Activated T-helper 2 cell treated with anti-CD3 and anti-CD28 coated beads, Interferon-gamma antibody, Interleukin-2, Interleukin-4, amounts not matched to agents 10 μg/mL and 5 μg/mL and 100 μg/mL, durations not matched to agents 14 hours and 24 hours and 36 hours (primary cell): ENCODE measurements at regions of chr3 and their contacts with region 1.

Region 1: DNA sequence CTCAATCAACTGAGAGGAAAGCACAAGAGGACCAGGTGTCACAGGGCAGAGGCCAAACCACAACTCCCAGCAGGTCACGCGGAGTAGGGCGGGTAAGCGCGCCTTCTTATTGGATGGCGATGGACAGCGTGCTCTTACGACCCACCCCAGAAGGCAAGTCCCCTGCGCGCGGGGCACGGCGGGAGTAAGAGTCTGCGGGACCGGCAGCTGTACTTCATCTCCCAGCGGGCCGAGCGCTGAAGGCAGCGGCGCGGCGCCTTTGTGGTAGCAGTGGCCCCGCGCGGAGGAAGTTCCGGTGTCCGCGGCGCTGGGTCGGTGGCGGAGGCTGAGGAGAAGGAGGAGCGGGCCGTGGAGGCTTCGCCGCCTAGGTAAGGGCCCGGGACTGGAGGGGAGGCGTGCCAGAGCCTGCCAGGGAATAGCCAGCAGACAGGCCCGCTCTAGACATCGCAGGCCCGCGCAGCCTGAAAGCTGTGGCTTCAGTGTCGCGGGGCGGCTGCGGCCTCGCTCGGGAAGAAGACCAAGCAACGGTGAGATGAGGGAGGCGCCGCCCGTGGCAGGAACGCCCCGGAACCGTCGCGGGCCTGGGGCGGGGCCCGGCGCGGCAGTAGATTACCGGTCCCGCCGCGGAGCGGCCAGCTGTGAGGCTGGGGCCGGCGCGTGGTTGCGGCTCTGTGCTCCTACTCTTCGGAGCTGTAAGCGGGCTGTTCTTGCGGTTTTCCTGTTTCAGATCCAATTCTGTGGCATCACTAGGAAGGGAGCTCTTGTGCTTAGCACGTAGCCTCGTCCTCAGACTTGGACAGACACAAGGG is at the start of gene RBM6:
- DNase-seq: peak; percentile 95
- H3K4me3 Mint-ChIP-seq: peak within 1 kb of the TSS; percentile 91
- H3K27ac Mint-ChIP-seq: peak within 1 kb of the TSS; percentile 92
- H3K4me1 Mint-ChIP-seq: peaks cover 16% of the 10 kb centered on the region
- H3K27me3 Mint-ChIP-seq: no peaks in the 10 kb centered on the region
- total RNA-seq, gene RBM6: 99.2 and 104 TPM in 2 replicates

Region 2: GRCh38 chr3:49929331-49930240 is 10.5 kb before region 1 on chr3 and contains the start of gene MON1A:
- intact Hi-C with region 1: loop called (anchors 1 kb)
- DNase-seq: peak; percentile 84
- H3K4me3 Mint-ChIP-seq: peak within 1 kb of the TSS; percentile 90
- H3K27ac Mint-ChIP-seq: peak within 1 kb of the TSS; percentile 36
- H3K4me1 Mint-ChIP-seq: peaks cover 16% of the 10 kb centered on the region
- H3K27me3 Mint-ChIP-seq: no peaks in the 10 kb centered on the region
- total RNA-seq, gene MON1A: 15.1 and 15.7 TPM in 2 replicates

Region 3: DNA sequence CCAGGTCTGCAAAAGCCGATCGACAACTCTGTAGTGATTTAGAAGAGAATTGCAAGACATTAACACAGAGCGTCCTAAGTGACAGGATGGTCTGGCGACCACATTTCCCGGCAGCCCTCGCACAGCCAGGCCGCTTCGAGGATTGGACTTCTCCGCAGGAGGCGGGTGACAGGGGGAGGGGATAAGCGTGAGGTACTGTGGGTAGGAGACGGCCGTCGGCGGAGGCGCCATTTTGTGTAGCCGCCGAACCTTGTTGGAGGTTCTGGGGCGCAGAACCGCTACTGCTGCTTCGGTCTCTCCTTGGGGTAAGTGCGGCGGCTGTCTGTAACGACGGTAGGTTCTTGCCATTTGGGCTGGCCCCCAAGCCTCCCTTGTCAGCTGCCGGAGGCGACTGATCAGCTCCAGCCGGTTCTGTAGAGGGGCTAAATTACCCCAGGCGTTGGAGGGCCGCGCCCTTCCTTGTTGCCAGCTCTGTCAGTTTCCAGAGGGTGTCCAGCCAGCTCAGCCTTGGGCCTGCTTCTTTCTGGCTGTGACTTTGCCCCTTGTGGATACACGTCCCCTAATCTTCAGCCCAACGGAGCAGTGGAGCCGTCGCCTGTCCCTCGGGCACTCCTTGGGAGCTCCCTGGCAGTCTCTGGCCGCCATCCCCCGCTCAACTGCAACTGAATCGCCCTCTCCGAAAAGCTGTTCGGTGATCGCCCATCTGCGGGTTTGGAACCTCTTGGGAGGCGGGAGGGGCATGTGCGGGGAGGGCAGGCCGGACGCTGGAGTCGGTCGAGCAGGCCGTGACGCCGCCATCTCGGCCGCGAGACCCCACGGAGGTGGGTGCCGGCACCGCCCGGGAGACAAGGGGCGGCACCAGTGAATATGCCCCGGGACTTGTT is 148.9 kb after region 1 on chr3 and contains the start of gene RBM5:
- intact Hi-C with region 1: loop called (anchors 2 kb)
- DNase-seq: peak; percentile 91
- H3K4me3 Mint-ChIP-seq: peak within 1 kb of the TSS; percentile 95
- H3K27ac Mint-ChIP-seq: peak within 1 kb of the TSS; percentile 95
- H3K4me1 Mint-ChIP-seq: peaks cover 26% of the 10 kb centered on the region
- H3K27me3 Mint-ChIP-seq: no peaks in the 10 kb centered on the region
- total RNA-seq, gene RBM5: 139 and 144 TPM in 2 replicates